CD4-positive, alpha-beta memory T cell (primary cell): ENCODE measurements at regions of chr2 and their contacts with region 1.

Region 1: GRCh38 chr2:101205521-101205998 is 47.1 kb upstream of the CNOT11 start:
- DNase-seq: peak in 4 of 5 donors; percentile 37 to 57 (median 56)
- H3K4me3 ChIP-seq: no peak overlapping the region
- H3K4me3 Mint-ChIP-seq: peak overlapping the region; percentile 55 to 87 (median 72)
- H3K27ac ChIP-seq: no peak overlapping the region
- H3K27ac Mint-ChIP-seq: peak overlapping the region; percentile 68 to 90 (median 83)
- H3K4me1 ChIP-seq: peaks cover 4% of the 10 kb centered on the region
- H3K4me1 Mint-ChIP-seq: peaks cover 2 to 14% (median 12%) of the 10 kb centered on the region in 4 donors
- H3K27me3 ChIP-seq: no peaks in the 10 kb centered on the region
- H3K27me3 Mint-ChIP-seq: no peaks in the 10 kb centered on the region

Region 2: GRCh38 chr2:101007415-101008345 is 197.9 kb before region 1 on chr2:
- CTCF ChIA-PET with region 1: interaction called, 58 read pairs
- POLR2A ChIA-PET with region 1: interaction called, 10 read pairs
- intact Hi-C with region 1: loop called (anchors 1 kb)
- DNase-seq: no peak
- H3K4me3 ChIP-seq: no peak overlapping the region
- H3K4me3 Mint-ChIP-seq: no peak overlapping the region
- H3K27ac ChIP-seq: no peak overlapping the region
- H3K27ac Mint-ChIP-seq: peak overlapping the region in 5 of 7 donors; percentile 57 to 91 (median 83)
- H3K4me1 ChIP-seq: peaks cover 31% of the 10 kb centered on the region
- H3K4me1 Mint-ChIP-seq: peaks cover 33 to 58% (median 43%) of the 10 kb centered on the region in 4 donors
- H3K27me3 ChIP-seq: no peaks in the 10 kb centered on the region
- H3K27me3 Mint-ChIP-seq: no peaks in the 10 kb centered on the region

Region 3: DNA sequence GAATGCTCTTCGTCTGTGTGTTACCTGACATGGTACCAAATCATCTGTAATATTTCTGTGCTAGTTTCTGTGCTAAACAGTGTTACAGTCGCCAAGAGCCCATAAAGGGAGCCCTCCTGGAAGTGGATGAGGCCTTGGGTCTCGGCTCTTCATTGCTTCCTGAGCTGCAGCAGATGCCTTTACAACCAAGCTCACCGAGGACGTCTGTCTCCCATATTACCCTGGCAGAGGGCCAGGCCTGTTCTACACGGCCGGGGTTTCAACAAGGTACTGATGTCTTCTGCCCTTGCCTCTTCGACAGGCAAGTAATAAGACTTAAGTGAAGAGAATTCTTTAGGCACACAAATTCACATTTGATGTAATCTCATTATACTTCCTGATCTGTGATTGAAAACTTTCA is 186.6 kb before region 1 on chr2:
- CTCF ChIA-PET with region 1: interaction called, 58 read pairs
- POLR2A ChIA-PET with region 1: no interaction called
- intact Hi-C with region 1: no loop called
- DNase-seq: no peak
- H3K4me3 ChIP-seq: no peak overlapping the region
- H3K4me3 Mint-ChIP-seq: no peak overlapping the region
- H3K27ac ChIP-seq: no peak overlapping the region
- H3K27ac Mint-ChIP-seq: peak overlapping the region in 2 of 7 donors; percentile 25 to 48
- H3K4me1 ChIP-seq: no peaks in the 10 kb centered on the region
- H3K4me1 Mint-ChIP-seq: peaks cover 0 to 1% (median 0%) of the 10 kb centered on the region in 4 donors
- H3K27me3 ChIP-seq: no peaks in the 10 kb centered on the region
- H3K27me3 Mint-ChIP-seq: no peaks in the 10 kb centered on the region

Region 4: DNA sequence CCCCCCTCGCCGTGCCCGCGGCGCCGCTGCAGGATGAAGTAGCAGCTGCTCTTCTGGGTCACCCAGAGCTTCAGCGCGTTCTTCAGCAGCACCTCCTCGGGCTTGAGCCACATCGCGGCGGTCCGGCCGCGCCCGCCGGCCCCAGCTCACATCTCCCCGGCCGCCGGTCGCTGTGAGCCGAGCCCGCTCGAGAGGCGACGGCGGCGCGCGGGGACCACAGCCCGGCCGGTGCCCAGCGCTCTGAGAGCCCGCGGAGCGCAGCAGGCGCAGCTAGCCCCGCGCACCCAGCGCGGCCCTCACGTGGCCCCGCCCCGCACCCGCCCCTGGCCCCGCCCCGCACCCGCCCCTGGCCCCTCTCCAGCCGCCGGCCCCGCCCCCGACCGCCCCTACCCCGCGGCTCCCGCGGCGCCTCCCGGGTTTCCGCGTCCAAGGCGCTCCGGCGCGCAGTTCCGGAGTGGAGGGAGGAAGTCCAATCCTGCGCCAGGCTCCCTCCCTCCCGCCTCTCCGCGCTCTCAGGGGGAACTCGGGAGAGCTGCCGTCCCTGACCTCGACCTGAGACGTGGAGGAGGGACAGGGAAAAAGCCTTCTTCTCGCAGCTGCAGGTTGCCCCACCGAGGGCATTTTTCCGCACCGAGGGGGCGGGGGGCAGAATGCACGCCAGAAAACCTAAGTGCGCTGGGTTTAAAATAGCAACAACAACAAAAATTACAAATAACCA is 54.3 kb before region 1 on chr2 and contains the start of gene TBC1D8:
- CTCF ChIA-PET with region 1: interaction called, 10 read pairs
- POLR2A ChIA-PET with region 1: interaction called, 3 read pairs
- intact Hi-C with region 1: no loop called
- DNase-seq: peak; percentile 38 to 65 (median 55)
- H3K4me3 ChIP-seq: peak within 1 kb of the TSS; percentile 28 to 33
- H3K4me3 Mint-ChIP-seq: peak within 1 kb of the TSS; percentile 77 to 92 (median 86)
- H3K27ac ChIP-seq: no peak within 1 kb of the TSS
- H3K27ac Mint-ChIP-seq: peak within 1 kb of the TSS; percentile 19 to 88 (median 71)
- H3K4me1 ChIP-seq: peaks cover 19% of the 10 kb centered on the region
- H3K4me1 Mint-ChIP-seq: peaks cover 18 to 27% (median 22%) of the 10 kb centered on the region in 4 donors
- H3K27me3 ChIP-seq: no peaks in the 10 kb centered on the region
- H3K27me3 Mint-ChIP-seq: peaks cover 2 to 7% of the 10 kb centered on the region in 2 donors
- total RNA-seq, gene TBC1D8: 2.0 to 2.4 TPM

Region 5: DNA sequence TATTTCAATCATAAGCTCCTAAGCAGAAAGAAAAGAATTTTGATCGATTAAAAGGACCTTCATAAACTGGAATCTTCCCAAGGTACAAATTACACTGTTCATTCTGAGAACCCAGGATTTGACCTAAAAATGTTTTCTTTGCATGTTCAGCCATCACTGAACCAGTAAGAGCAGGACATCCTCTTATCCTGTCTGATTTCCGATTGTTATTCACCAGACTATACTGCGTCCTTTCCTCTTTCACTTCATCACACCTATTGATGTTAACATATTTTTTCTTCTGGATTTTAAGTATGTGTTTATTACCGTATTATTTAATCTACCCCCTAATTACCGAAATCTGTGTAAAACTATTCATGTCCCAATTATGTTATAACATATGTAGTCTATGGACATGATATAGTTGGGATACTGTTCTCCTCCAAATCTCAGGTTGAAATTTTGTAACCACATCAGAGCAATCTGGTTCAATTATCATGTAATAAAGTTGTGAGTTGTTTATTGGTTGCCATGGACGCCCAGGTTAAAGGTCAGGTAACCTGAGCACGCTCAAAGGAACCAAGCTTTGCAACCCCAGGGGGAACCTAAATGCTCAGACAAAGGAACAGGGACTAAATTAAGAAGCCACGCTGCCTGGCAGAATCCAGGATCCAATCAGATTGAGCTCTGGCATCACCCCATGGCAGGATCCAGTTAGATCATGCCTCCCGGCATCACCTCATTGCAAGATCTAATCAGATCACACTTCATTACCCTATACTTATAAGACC is 42.8 kb before region 1 on chr2:
- CTCF ChIA-PET with region 1: no interaction called
- POLR2A ChIA-PET with region 1: no interaction called
- intact Hi-C with region 1: no loop called
- DNase-seq: no peak
- H3K4me3 ChIP-seq: no peak overlapping the region
- H3K4me3 Mint-ChIP-seq: no peak overlapping the region
- H3K27ac ChIP-seq: no peak overlapping the region
- H3K27ac Mint-ChIP-seq: no peak overlapping the region
- H3K4me1 ChIP-seq: no peaks in the 10 kb centered on the region
- H3K4me1 Mint-ChIP-seq: no peaks in the 10 kb centered on the region
- H3K27me3 ChIP-seq: no peaks in the 10 kb centered on the region
- H3K27me3 Mint-ChIP-seq: no peaks in the 10 kb centered on the region

Region 6: GRCh38 chr2:101328474-101329007 is 123.0 kb after region 1 on chr2:
- CTCF ChIA-PET with region 1: no interaction called
- POLR2A ChIA-PET with region 1: no interaction called
- intact Hi-C with region 1: no loop called
- DNase-seq: peak; percentile 65 to 81 (median 80)
- H3K4me3 ChIP-seq: peak overlapping the region; percentile 2 to 39
- H3K4me3 Mint-ChIP-seq: no peak overlapping the region
- H3K27ac ChIP-seq: peak overlapping the region; percentile 52
- H3K27ac Mint-ChIP-seq: no peak overlapping the region
- H3K4me1 ChIP-seq: peaks cover 70% of the 10 kb centered on the region
- H3K4me1 Mint-ChIP-seq: peaks cover 5 to 33% (median 6%) of the 10 kb centered on the region in 4 donors
- H3K27me3 ChIP-seq: no peaks in the 10 kb centered on the region
- H3K27me3 Mint-ChIP-seq: no peaks in the 10 kb centered on the region